ENCODE measurements at regions of chr12 and their contacts with region 1.

Region 1: DNA sequence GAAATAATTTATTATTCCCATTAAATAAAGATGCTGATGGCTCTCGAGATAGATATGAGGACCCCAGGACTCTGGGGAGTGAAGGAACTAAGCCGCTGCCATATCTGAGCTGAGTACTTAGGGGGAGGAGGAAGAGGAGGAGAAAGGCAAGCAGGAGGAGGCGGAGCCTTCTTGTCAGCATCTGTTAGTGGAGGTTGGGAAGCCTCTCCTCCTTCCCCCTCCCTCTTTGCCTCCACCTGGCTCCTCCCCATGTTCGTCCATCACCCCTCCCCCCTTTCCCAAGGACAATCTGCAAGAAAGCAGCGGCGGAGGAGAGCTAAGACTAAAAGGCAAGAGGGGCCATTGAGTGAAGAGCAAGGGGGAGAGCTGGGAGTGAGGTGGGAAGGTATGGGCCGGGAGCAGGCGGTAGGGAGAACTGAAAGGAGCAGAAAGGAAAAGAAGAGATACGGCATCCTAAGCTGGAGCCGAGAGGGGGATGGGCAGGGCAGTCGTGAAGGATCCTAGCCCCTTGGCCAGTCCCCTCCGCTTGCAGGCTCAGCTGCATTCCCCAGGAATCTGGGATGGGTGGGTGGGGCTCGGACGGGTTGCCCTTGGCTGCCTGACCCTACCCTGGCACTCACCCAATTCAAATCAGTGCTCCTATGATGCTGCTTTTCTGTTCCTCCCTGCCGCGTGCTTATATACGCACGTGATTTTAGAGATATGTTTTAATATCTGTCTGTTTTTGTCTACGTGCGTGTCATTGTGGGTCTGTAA is at the start of gene PFKM:
- DNase-seq: peak; percentile 86
- ATAC-seq: peak; percentile 100
- H3K4me3 Mint-ChIP-seq: peak within 1 kb of the TSS; percentile 93
- H3K27ac Mint-ChIP-seq: peak within 1 kb of the TSS; percentile 89
- H3K4me1 Mint-ChIP-seq: peaks cover 16% of the 10 kb centered on the region
- H3K27me3 Mint-ChIP-seq: peaks cover 5% of the 10 kb centered on the region
- total RNA-seq, gene PFKM: 53.2 to 79.6 TPM

Region 2: GRCh38 chr12:47935184-47935583 is 184.1 kb before region 1 on chr12:
- CTCF ChIA-PET with region 1: no interaction called
- POLR2A ChIA-PET with region 1: no interaction called
- intact Hi-C with region 1: no loop called
- DNase-seq: no peak
- ATAC-seq: no peak
- H3K4me3 Mint-ChIP-seq: no peak overlapping the region
- H3K27ac Mint-ChIP-seq: no peak overlapping the region
- H3K4me1 Mint-ChIP-seq: no peaks in the 10 kb centered on the region
- H3K27me3 Mint-ChIP-seq: no peaks in the 10 kb centered on the region

Region 3: GRCh38 chr12:48061948-48062719 is 57.1 kb before region 1 on chr12:
- CTCF ChIA-PET with region 1: no interaction called
- POLR2A ChIA-PET with region 1: no interaction called
- intact Hi-C with region 1: no loop called
- DNase-seq: no peak
- ATAC-seq: no peak
- H3K4me3 Mint-ChIP-seq: no peak overlapping the region
- H3K27ac Mint-ChIP-seq: no peak overlapping the region
- H3K4me1 Mint-ChIP-seq: no peaks in the 10 kb centered on the region
- H3K27me3 Mint-ChIP-seq: no peaks in the 10 kb centered on the region

Region 4: GRCh38 chr12:48105862-48106680 is 13.2 kb before region 1 on chr12 and contains the start of gene SENP1:
- CTCF ChIA-PET with region 1: interaction called, 4 read pairs
- POLR2A ChIA-PET with region 1: no interaction called
- intact Hi-C with region 1: loop called (anchors 1 kb)
- DNase-seq: peak; percentile 94
- ATAC-seq: peak; percentile 87
- H3K4me3 Mint-ChIP-seq: peak within 1 kb of the TSS; percentile 95
- H3K27ac Mint-ChIP-seq: peak within 1 kb of the TSS; percentile 98
- H3K4me1 Mint-ChIP-seq: peaks cover 46% of the 10 kb centered on the region
- H3K27me3 Mint-ChIP-seq: no peaks in the 10 kb centered on the region
- total RNA-seq, gene SENP1: 44.4 to 61.8 TPM

Region 5: DNA sequence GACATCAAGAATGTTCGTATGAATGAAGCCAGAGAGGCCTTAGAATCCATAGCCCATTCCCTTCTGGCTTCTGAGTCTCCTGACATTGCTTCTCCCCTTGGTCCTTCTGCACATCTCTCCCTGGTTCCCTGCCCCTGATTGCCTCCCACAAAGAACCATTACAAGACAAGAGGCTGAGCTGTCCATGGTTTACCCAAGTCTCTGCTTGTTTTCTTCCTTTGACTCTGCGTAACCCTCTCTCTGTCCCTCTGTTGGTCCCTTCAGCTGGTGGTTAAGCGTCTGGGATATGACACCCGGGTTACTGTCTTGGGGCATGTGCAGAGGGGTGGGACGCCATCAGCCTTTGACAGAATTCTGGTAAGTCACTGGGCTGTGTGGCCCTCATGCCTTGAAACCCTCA is 15.8 kb after region 1 on chr12:
- CTCF ChIA-PET with region 1: no interaction called
- POLR2A ChIA-PET with region 1: no interaction called
- intact Hi-C with region 1: no loop called
- DNase-seq: no peak
- ATAC-seq: no peak
- H3K4me3 Mint-ChIP-seq: no peak overlapping the region
- H3K27ac Mint-ChIP-seq: no peak overlapping the region
- H3K4me1 Mint-ChIP-seq: no peaks in the 10 kb centered on the region
- H3K27me3 Mint-ChIP-seq: no peaks in the 10 kb centered on the region

Measured in activated CD4-positive, alpha-beta T cell treated with anti-CD3 and anti-CD28 coated beads for 36 hours (primary cell).